Common myeloid progenitor, CD34-positive (primary cell): ENCODE measurements at regions of chr14 and their contacts with region 1.

Region 1: GRCh38 chr14:64434528-64434927 is 30.8 kb upstream of the AKAP5 start:
- DNase-seq: no peak
- H3K4me3 ChIP-seq: no peak overlapping the region
- H3K27ac ChIP-seq: no peak overlapping the region
- H3K4me1 ChIP-seq: no peaks in the 10 kb centered on the region
- H3K27me3 ChIP-seq: no peaks in the 10 kb centered on the region

Region 2: GRCh38 chr14:64421166-64421565 is 13.4 kb before region 1 on chr14:
- CTCF ChIA-PET with region 1: interaction called, 53 read pairs
- POLR2A ChIA-PET with region 1: interaction called, 3 read pairs
- DNase-seq: no peak
- H3K4me3 ChIP-seq: no peak overlapping the region
- H3K27ac ChIP-seq: no peak overlapping the region
- H3K4me1 ChIP-seq: no peaks in the 10 kb centered on the region
- H3K27me3 ChIP-seq: no peaks in the 10 kb centered on the region

Region 3: GRCh38 chr14:64444984-64445845 is 10.7 kb after region 1 on chr14:
- CTCF ChIA-PET with region 1: interaction called, 12 read pairs
- POLR2A ChIA-PET with region 1: no interaction called
- DNase-seq: peak in 2 of 3 donors; percentile 28 to 30
- H3K4me3 ChIP-seq: no peak overlapping the region
- H3K27ac ChIP-seq: peak overlapping the region in 1 of 2 experiments; percentile 54
- H3K4me1 ChIP-seq: peaks cover 0 to 7% (median 0%) of the 10 kb centered on the region in 4 experiments
- H3K27me3 ChIP-seq: no peaks in the 10 kb centered on the region

Region 4: DNA sequence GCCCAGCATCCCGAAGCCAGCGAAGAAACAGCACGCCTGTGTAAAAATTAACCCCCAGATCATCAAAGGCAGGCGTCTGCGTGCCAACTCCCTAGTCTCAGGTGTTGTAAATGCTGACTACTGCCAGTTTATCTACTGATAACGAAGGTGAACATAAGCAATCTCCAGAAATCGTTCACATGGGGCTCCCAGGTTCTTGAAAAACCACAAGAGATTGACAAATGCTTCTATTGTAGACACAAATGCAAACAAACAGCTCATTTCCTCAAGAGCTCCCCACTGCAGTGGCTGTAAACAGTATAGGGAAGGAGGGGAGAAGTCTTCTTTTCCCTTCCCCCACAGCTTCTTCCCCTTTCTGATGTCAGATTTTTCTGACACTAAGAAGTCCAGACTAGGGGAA is 264.4 kb after region 1 on chr14:
- CTCF ChIA-PET with region 1: no interaction called
- POLR2A ChIA-PET with region 1: no interaction called
- DNase-seq: peak; percentile 51 to 79 (median 79)
- H3K4me3 ChIP-seq: peak overlapping the region in 3 of 7 experiments; percentile 6 to 32 (median 19)
- H3K27ac ChIP-seq: no peak overlapping the region
- H3K4me1 ChIP-seq: peaks cover 13 to 73% (median 25%) of the 10 kb centered on the region in 4 experiments
- H3K27me3 ChIP-seq: peaks cover 0 to 39% (median 29%) of the 10 kb centered on the region in 5 experiments